Activated naive CD4-positive, alpha-beta T cell treated with anti-CD3 and anti-CD28 coated beads for 36 hours (primary cell): ENCODE measurements at regions of chrX and their contacts with region 1.

Region 1: GRCh38 chrX:41666251-41666650 is 22.5 kb upstream of the GPR34 start:
- DNase-seq: peak; percentile 6
- H3K4me3 Mint-ChIP-seq: no peak overlapping the region
- H3K27ac Mint-ChIP-seq: peak overlapping the region; percentile 71
- H3K4me1 Mint-ChIP-seq: peaks cover 43% of the 10 kb centered on the region
- H3K27me3 Mint-ChIP-seq: no peaks in the 10 kb centered on the region

Region 2: DNA sequence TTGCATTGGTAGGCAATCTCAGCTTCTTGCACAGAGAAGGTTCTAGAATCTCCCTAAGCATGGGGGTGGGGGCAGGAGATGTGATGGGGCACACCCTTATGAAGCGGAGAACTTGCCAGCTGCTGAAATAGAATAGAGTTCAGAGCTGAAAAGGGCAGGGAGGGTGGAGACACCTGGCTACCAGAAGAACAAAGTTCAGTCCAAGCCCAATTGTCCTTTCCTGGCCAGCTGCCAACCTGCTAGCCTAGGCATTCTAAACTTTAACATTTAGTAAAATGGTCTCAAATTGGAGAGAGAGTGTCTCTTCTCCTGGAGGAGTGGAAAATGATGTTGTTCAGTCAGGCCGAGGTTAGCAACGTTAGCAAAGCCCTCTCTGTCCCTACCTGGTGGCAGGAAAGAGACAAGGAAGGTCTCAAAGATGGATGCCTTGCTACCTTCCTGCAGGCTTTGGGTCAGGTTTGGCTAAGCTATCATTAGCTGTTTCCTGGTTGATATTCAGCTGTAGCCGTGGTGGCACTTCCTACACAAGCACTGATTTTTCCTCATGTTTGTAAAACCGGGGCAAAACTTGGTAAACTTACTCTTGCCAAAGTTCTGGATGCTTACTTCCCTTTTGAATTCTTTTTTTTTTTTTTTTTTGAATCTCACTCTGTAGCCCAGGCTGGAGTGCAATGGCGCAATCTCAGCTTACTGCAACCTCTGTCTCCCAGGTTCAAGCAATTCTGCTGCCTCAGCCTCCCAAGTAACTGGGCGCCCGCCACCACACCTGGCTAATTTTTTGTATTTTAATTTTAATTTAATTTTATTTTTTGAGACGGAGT is 253.8 kb before region 1 on chrX:
- CTCF ChIA-PET with region 1: no interaction called
- intact Hi-C with region 1: no loop called
- DNase-seq: peak; percentile 28
- H3K4me3 Mint-ChIP-seq: no peak overlapping the region
- H3K27ac Mint-ChIP-seq: no peak overlapping the region
- H3K4me1 Mint-ChIP-seq: peaks cover 2% of the 10 kb centered on the region
- H3K27me3 Mint-ChIP-seq: no peaks in the 10 kb centered on the region

Region 3: GRCh38 chrX:41441934-41442823 is 224.1 kb before region 1 on chrX:
- CTCF ChIA-PET with region 1: no interaction called
- intact Hi-C with region 1: no loop called
- DNase-seq: peak; percentile 86
- H3K4me3 Mint-ChIP-seq: peak overlapping the region; percentile 62
- H3K27ac Mint-ChIP-seq: peak overlapping the region; percentile 69
- H3K4me1 Mint-ChIP-seq: peaks cover 10% of the 10 kb centered on the region
- H3K27me3 Mint-ChIP-seq: no peaks in the 10 kb centered on the region

Region 4: DNA sequence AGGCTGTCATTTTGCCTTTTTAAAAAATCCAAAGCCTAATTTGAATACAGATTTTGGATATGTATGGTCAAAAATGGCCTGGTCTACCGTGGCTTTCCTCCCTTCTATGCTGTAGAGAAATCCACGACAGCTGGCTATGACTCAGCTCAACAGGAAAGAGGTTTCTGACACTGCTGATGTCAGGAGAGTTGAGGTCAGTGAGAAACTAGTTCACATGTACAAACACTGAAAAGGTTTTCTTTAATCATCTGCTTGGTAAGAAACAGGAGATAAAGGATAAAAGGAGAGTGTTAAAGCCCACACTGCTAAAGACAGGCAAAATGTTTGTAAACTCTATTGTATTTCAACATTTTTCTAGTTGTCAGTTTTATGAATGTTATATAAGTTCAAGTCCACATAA is 105.2 kb before region 1 on chrX:
- CTCF ChIA-PET with region 1: no interaction called
- intact Hi-C with region 1: loop called (anchors 2 kb)
- DNase-seq: peak; percentile 56
- H3K4me3 Mint-ChIP-seq: no peak overlapping the region
- H3K27ac Mint-ChIP-seq: peak overlapping the region; percentile 41
- H3K4me1 Mint-ChIP-seq: peaks cover 28% of the 10 kb centered on the region
- H3K27me3 Mint-ChIP-seq: no peaks in the 10 kb centered on the region

Region 5: GRCh38 chrX:41688835-41689234 is 22.6 kb after region 1 on chrX and contains the start of gene GPR34:
- CTCF ChIA-PET with region 1: no interaction called
- intact Hi-C with region 1: loop called (anchors 2 kb)
- DNase-seq: peak; percentile 32
- H3K4me3 Mint-ChIP-seq: no peak within 1 kb of the TSS
- H3K27ac Mint-ChIP-seq: no peak within 1 kb of the TSS
- H3K4me1 Mint-ChIP-seq: peaks cover 34% of the 10 kb centered on the region
- H3K27me3 Mint-ChIP-seq: no peaks in the 10 kb centered on the region
- total RNA-seq, gene GPR34: not detected

Region 6: DNA sequence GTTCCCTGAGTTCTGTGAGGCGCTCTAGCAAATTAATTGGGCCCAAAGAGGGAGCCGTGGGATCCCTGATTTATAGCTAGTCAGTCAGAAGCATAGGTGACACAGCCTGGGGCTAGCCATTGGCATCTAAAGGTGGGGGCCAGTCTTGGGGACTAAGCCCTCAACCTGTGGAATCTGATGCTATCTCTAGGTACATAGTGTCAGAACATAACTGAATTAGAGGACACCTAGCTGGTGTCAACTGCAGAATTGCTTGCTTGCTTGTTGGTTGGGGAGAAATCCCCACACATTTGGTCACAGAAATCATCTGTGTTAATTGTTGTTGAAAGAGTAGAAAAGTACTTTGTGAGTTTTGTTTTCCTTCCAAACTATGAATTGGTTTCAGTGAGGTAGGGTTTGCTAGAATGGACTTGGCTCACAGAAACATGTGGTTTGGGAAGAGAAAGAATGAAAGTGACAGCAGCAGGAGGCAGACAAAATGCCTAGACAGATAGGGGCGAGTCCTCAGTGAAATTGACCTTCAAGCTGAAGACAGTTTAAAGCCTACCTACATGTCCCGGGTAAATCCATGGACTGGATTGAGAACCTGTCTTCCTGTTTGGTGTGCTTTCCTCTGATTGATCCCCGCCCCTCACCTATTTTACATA is 44.9 kb after region 1 on chrX:
- CTCF ChIA-PET with region 1: no interaction called
- intact Hi-C with region 1: loop called (anchors 1 kb)
- DNase-seq: no peak
- H3K4me3 Mint-ChIP-seq: no peak overlapping the region
- H3K27ac Mint-ChIP-seq: no peak overlapping the region
- H3K4me1 Mint-ChIP-seq: peaks cover 25% of the 10 kb centered on the region
- H3K27me3 Mint-ChIP-seq: no peaks in the 10 kb centered on the region